ENCODE measurements at regions of chr6 and their contacts with region 1.

Region 1: GRCh38 chr6:5471044-5471443 is 209.7 kb downstream of the FARS2 start:
- DNase-seq: peak; percentile 87
- H3K4me3 ChIP-seq: peak overlapping the region; percentile 11
- H3K27ac ChIP-seq: peak overlapping the region; percentile 68
- H3K4me1 ChIP-seq: peaks cover 39% of the 10 kb centered on the region
- H3K27me3 ChIP-seq: no peaks in the 10 kb centered on the region
- CTCF ChIP-seq: peak; percentile 97

Region 2: DNA sequence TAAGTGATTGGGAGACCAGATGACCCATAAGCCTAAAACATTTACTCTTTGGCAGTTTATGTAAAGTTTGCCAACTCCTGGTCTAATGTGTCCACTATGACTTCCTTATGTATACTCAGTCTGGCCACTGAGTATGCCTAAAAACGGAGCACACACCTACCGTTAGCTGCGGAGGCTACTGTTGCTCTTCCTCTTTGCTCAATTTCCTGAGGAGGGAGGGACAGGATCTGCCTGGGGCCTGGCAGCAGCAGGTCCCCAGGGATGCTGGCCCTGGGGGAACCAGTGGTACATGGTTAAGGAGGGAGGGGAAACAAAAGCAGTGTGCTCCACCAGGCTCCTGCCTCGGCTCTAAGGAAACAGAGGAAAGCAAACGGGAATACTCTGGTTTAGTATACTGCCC is 581.3 kb before region 1 on chr6:
- CTCF ChIA-PET with region 1: no interaction called
- POLR2A ChIA-PET with region 1: no interaction called
- intact Hi-C with region 1: no loop called
- DNase-seq: peak; percentile 50
- H3K4me3 ChIP-seq: no peak overlapping the region
- H3K27ac ChIP-seq: no peak overlapping the region
- H3K4me1 ChIP-seq: peaks cover 9% of the 10 kb centered on the region
- H3K27me3 ChIP-seq: no peaks in the 10 kb centered on the region
- CTCF ChIP-seq: no peak

Region 3: GRCh38 chr6:5287205-5287965 is 183.7 kb before region 1 on chr6:
- CTCF ChIA-PET with region 1: no interaction called
- POLR2A ChIA-PET with region 1: no interaction called
- intact Hi-C with region 1: no loop called
- DNase-seq: peak; percentile 50
- H3K4me3 ChIP-seq: no peak overlapping the region
- H3K27ac ChIP-seq: peak overlapping the region; percentile 12
- H3K4me1 ChIP-seq: peaks cover 7% of the 10 kb centered on the region
- H3K27me3 ChIP-seq: no peaks in the 10 kb centered on the region
- CTCF ChIP-seq: no peak

Region 4: DNA sequence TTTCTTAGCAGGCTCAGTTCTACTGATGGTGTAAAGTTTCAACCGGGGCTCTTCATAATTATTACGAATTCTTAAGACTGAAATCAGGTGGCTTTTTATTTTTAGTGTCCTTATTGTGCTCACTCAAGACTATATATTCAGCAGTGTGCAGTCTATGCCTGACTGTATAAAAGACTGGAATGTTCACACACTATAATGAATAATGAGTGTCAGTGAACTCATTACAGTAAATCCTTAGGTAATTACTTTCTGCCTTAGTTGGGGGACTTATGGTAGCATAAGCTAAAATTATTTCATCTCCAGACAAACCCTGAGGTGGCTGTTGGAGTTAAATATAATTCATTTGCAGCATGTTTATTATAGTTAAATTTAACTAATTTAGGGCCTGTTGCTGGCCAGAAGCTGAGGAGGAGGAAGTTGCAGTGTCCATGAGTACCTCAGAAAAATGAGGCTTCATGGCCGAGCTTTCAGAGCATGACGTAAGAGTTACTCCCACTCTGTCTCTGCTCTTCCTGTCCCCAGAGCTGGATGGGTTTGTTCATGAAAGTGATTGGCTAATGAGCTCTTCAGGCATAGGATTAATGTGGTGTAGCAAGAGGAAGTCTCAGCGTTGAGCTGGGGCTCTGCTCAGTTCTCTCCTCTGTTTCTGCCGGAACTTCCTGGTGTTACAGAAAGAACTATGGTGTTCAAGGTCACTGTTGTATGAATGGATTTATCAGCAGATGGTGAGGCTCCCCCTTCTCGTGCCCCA is 199.9 kb after region 1 on chr6:
- CTCF ChIA-PET with region 1: interaction called, 15 read pairs
- POLR2A ChIA-PET with region 1: no interaction called
- intact Hi-C with region 1: loop called (anchors 2 kb)
- DNase-seq: peak; percentile 96
- H3K4me3 ChIP-seq: peak overlapping the region; percentile 15
- H3K27ac ChIP-seq: peak overlapping the region; percentile 93
- H3K4me1 ChIP-seq: peaks cover 66% of the 10 kb centered on the region
- H3K27me3 ChIP-seq: no peaks in the 10 kb centered on the region
- CTCF ChIP-seq: no peak

Region 5: DNA sequence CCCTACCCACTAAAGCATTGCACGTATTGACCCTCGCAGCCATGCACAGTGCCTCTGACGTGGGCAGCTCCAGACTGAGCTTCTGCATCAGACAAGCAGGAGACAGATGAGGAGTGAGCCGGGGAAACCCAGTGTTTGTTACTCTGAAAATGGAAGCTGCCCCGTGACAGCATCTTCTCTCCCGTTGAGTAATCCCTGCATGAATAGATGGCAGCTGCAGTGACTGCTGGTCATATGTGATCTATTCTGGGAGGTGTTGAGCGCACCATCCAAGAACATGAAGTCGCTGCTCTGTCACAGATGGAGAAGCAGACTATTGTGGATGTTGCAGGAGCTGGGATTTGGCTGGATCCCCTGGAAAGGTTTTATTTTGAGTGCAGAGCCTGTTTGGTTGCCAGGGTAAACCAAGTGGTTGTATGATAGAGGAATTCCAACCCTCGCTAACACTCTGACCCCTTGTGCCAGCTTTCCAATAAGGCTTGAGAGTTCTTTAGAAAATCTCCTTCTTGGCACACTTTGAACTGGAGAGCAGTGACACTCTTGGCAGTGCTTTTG is 293.4 kb after region 1 on chr6:
- CTCF ChIA-PET with region 1: interaction called, 3 read pairs
- POLR2A ChIA-PET with region 1: no interaction called
- intact Hi-C with region 1: loop called (anchors 1 kb)
- DNase-seq: no peak
- H3K4me3 ChIP-seq: no peak overlapping the region
- H3K27ac ChIP-seq: no peak overlapping the region
- H3K4me1 ChIP-seq: peaks cover 13% of the 10 kb centered on the region
- H3K27me3 ChIP-seq: no peaks in the 10 kb centered on the region
- CTCF ChIP-seq: no peak

Region 6: DNA sequence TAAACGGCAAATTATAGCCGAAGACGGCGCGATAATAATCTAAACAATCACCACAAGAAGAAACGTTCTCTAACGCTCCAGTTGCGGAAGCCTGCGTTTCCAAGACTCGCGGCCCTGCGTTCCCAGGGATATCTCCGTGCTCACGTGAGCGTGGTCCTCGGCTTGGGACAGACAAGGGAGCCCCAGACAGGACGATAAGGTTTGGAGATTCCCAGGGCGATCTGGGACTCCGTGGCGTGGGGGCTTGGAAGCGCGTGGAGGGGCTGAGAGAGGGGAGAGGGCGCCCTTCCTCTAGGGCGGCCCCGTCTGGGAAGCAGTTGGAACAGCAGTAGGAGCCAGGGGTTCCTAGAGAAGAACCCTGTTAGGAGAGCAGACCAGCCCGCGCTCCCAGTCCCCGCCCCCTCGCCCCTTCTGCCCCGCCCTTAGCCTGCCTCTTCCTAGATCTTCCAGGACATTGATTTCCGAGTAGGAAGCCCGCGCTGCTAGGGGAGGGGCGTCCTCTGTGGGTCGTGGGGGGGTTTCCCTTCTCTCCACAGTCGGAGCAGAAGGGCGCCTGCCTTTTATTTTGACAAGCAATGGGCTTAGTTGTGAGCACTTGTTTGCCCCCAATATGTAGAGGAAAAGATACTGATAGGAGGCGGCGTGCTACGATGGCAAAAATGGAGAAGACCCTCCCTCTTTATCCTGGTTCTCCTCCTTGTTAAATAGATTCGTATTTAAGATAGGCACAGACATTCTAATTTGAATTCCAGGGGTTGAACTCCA is 525.1 kb after region 1 on chr6:
- CTCF ChIA-PET with region 1: interaction called, 12 read pairs
- POLR2A ChIA-PET with region 1: no interaction called
- intact Hi-C with region 1: no loop called
- DNase-seq: peak; percentile 94
- H3K4me3 ChIP-seq: peak overlapping the region; percentile 54
- H3K27ac ChIP-seq: peak overlapping the region; percentile 74
- H3K4me1 ChIP-seq: peaks cover 28% of the 10 kb centered on the region
- H3K27me3 ChIP-seq: no peaks in the 10 kb centered on the region
- CTCF ChIP-seq: peak; percentile 68

Region 7: GRCh38 chr6:6003621-6004366 is 532.8 kb after region 1 on chr6:
- CTCF ChIA-PET with region 1: interaction called, 20 read pairs
- POLR2A ChIA-PET with region 1: no interaction called
- intact Hi-C with region 1: loop called (anchors 2 kb)
- DNase-seq: peak; percentile 80
- H3K4me3 ChIP-seq: peak overlapping the region; percentile 66
- H3K27ac ChIP-seq: peak overlapping the region; percentile 87
- H3K4me1 ChIP-seq: peaks cover 15% of the 10 kb centered on the region
- H3K27me3 ChIP-seq: no peaks in the 10 kb centered on the region
- CTCF ChIP-seq: no peak

Region 8: DNA sequence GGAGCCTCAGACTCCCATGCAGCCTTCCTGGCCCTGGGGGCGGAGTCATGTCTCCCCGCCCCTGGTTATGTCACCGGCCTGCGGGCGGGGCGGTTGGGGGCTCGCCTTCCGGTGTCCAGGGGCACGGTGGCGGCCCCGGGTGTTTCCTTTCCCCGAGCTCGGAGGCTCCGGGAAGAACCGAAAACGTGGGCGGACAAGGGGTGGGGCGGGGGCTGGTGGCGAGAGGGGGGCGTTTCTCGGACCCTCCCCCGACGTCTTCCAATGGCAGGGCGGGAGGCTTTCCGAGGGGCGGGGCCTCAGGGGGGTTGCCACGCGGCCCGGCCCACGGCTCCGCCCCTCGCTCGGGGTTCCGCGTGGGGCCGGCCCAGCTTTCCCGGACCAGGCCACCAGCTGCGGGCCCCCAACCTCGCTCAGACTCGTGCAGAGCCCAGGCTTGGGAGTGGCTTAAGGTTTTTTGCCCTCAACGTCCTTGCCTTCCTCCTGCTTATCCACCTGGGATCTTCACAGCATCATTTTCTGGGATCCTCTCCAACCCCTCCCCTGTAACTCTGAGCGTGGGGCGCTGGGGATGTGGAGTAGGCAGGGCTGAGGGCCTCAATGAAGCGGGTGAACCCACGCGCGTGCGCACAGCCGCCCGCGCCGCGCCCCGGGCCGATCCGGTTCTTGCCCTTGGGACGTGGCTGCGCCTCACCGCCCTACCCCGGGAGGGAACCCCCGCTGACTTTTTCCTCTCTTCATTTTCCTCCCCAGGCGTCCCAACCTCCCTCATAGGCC is 537.8 kb after region 1 on chr6:
- CTCF ChIA-PET with region 1: interaction called, 20 read pairs
- POLR2A ChIA-PET with region 1: no interaction called
- intact Hi-C with region 1: loop called (anchors 2 kb)
- DNase-seq: peak; percentile 96
- H3K4me3 ChIP-seq: peak overlapping the region; percentile 66
- H3K27ac ChIP-seq: peak overlapping the region; percentile 90
- H3K4me1 ChIP-seq: peaks cover 13% of the 10 kb centered on the region
- H3K27me3 ChIP-seq: no peaks in the 10 kb centered on the region
- CTCF ChIP-seq: no peak

Region 9: DNA sequence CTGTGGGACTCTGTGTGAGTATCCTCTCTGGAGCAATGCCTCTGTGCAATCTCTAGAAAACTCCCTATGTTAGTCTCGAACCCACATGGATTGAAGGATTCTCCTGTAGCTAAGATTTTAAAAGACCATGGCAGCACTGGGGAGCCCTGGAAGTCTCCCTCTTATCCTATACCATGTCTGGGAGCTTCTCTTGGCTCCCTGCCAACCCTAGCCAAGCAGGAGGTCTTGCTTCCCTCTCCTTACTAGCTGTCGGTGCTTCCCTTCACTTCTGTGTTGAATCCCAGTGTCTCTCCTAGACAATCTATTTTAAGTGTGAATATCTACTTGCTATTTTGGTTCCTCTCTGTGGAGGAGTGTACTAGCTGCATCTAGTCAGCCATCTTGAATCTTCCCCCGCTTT is 654.5 kb after region 1 on chr6:
- CTCF ChIA-PET with region 1: no interaction called
- POLR2A ChIA-PET with region 1: no interaction called
- intact Hi-C with region 1: no loop called
- DNase-seq: peak; percentile 18
- H3K4me3 ChIP-seq: no peak overlapping the region
- H3K27ac ChIP-seq: no peak overlapping the region
- H3K4me1 ChIP-seq: no peaks in the 10 kb centered on the region
- H3K27me3 ChIP-seq: no peaks in the 10 kb centered on the region
- CTCF ChIP-seq: no peak

Region 10: GRCh38 chr6:6547110-6547879 is 1076.3 kb after region 1 on chr6:
- CTCF ChIA-PET with region 1: interaction called, 7 read pairs
- POLR2A ChIA-PET with region 1: no interaction called
- intact Hi-C with region 1: loop called (anchors 5 kb)
- DNase-seq: peak; percentile 87
- H3K4me3 ChIP-seq: peak overlapping the region; percentile 37
- H3K27ac ChIP-seq: no peak overlapping the region
- H3K4me1 ChIP-seq: peaks cover 6% of the 10 kb centered on the region
- H3K27me3 ChIP-seq: no peaks in the 10 kb centered on the region
- CTCF ChIP-seq: peak; percentile 91

Measured in A673 (cell line).